Heart right ventricle (tissue), 16 donors: ENCODE measurements at regions of chr16 and their contacts with region 1.

Region 1: DNA sequence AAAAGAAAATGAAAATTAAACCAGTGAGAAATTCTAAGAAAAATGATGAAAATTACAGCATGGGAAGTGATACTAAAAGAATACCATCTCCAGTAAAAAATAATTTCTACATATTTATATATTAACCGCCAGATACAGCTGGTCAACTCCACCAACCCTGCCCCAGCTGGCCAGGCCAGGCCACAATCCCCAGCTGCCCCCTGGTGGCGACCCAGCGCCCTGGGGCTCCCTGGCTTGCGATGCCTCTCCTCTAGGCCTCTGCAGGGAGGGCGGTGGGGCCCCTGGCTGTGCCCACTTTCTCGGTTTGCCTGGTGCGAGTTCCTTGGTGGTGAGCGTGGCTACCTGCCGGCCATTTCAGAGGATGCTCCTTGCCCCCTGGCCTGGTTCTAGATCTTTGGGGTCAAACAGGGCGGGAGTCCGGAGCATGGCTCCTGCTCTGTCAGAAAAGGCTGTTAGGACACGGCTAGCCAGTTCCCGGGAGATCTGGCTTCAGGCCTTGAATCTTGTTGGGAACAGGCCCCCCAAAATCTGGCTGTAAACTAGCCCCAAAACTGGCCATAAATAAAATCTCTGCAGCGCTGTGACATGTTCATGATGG is 14.5 kb downstream of the GLIS2 start:
- DNase-seq: peak; percentile 84 to 89
- ATAC-seq: peak; percentile 54 to 72 (median 63)
- H3K4me3 ChIP-seq: no peak overlapping the region
- H3K27ac ChIP-seq: peak overlapping the region in 7 of 10 donors; percentile 88 to 99 (median 95)
- H3K4me1 ChIP-seq: peaks cover 33 to 54% (median 47%) of the 10 kb centered on the region in 9 donors
- H3K27me3 ChIP-seq: peaks cover 0 to 4% (median 0%) of the 10 kb centered on the region in 7 donors
- CTCF ChIP-seq: peak; percentile 94 to 99 (median 97)

Region 2: GRCh38 chr16:3983081-3983520 is 347.3 kb before region 1 on chr16:
- intact Hi-C with region 1: loop called in 2 of 10 experiments (anchors 5 to 10 kb)
- DNase-seq: peak; percentile 65 to 73
- ATAC-seq: peak; percentile 72 to 88 (median 83)
- H3K4me3 ChIP-seq: no peak overlapping the region
- H3K27ac ChIP-seq: no peak overlapping the region
- H3K4me1 ChIP-seq: peaks cover 0 to 11% (median 0%) of the 10 kb centered on the region in 9 donors
- H3K27me3 ChIP-seq: no peaks in the 10 kb centered on the region
- CTCF ChIP-seq: peak; percentile 29 to 85 (median 74)

Region 3: GRCh38 chr16:4183237-4184036 is 146.9 kb before region 1 on chr16:
- intact Hi-C with region 1: loop called in 1 of 10 experiments (anchors 5 kb)
- DNase-seq: peak; percentile 91 to 97
- ATAC-seq: peak; percentile 95 to 98 (median 96)
- H3K4me3 ChIP-seq: peak overlapping the region; percentile 62 to 84 (median 72)
- H3K27ac ChIP-seq: peak overlapping the region; percentile 79 to 100 (median 94)
- H3K4me1 ChIP-seq: peaks cover 3 to 20% (median 8%) of the 10 kb centered on the region in 9 donors
- H3K27me3 ChIP-seq: peaks cover 0 to 13% (median 0%) of the 10 kb centered on the region in 7 donors
- CTCF ChIP-seq: peak in 4 of 9 donors; percentile 11 to 45 (median 42)

Region 4: GRCh38 chr16:4200000-4200780 is 130.2 kb before region 1 on chr16:
- intact Hi-C with region 1: loop called in 6 of 10 experiments (anchors 1 to 10 kb)
- DNase-seq: peak; percentile 66 to 69
- ATAC-seq: peak; percentile 45 to 86 (median 78)
- H3K4me3 ChIP-seq: no peak overlapping the region
- H3K27ac ChIP-seq: peak overlapping the region in 2 of 10 donors; percentile 3 to 9
- H3K4me1 ChIP-seq: peaks cover 0 to 19% (median 8%) of the 10 kb centered on the region in 9 donors
- H3K27me3 ChIP-seq: no peaks in the 10 kb centered on the region
- CTCF ChIP-seq: peak; percentile 29 to 82 (median 72)

Region 5: DNA sequence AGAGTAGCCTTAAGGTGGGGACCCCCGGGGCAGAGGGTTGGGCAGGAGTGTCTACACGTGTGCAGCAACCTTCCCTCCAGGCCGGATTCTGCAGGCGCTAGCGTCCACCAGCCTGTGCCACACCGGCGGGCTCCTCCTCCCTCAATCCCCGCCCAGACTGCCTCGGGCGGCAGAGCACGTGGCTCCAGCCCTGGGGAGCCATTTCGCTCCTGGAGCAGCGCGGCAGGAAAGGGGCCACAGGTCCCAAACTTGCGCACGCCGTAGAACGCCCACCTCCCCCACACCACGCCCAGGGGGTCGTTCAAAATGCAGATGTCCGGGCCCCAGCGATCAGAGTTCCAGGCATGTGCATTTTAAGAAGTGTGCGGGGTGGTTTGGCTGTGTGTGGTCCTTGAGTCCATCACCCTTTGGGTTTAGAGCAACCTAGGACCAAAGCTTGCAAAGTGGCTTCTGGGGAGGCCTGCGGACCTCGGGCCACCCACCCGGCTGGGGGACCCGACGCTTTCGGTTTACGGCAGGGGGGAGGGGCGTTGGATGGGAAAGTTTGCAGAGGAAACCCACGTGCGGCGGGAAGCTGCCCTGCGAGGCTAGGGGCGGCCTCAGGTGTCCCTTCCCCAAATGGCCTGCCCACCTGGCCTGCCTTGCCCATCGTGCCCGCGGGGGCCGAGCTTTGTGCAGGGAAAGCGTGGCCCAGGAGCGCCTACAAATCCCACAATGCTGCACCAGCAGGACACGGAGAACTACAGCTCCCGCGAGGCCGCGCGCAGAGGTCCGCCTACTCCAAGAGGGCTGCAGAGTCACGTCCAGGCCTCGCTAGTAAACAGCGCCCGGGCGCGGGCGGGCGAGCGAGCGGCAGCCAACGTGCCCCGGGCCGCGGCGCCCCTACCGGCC is 59.0 kb before region 1 on chr16:
- intact Hi-C with region 1: loop called in 3 of 10 experiments (anchors 5 kb)
- DNase-seq: peak; percentile 92 to 93
- ATAC-seq: peak; percentile 83 to 90 (median 89)
- H3K4me3 ChIP-seq: peak overlapping the region; percentile 71 to 96 (median 86)
- H3K27ac ChIP-seq: peak overlapping the region; percentile 72 to 97 (median 91)
- H3K4me1 ChIP-seq: peaks cover 0 to 29% (median 17%) of the 10 kb centered on the region in 9 donors
- H3K27me3 ChIP-seq: no peaks in the 10 kb centered on the region
- CTCF ChIP-seq: peak in 2 of 9 donors; percentile 17 to 48

Region 6: GRCh38 chr16:4288148-4288921 is 42.0 kb before region 1 on chr16:
- intact Hi-C with region 1: loop called (anchors 1 to 5 kb)
- DNase-seq: peak; percentile 79 to 83
- ATAC-seq: peak; percentile 79 to 86 (median 81)
- H3K4me3 ChIP-seq: no peak overlapping the region
- H3K27ac ChIP-seq: no peak overlapping the region
- H3K4me1 ChIP-seq: peaks cover 5 to 33% (median 27%) of the 10 kb centered on the region in 9 donors
- H3K27me3 ChIP-seq: peaks cover 0 to 3% (median 0%) of the 10 kb centered on the region in 7 donors
- CTCF ChIP-seq: peak; percentile 93 to 99 (median 96)

Region 7: GRCh38 chr16:4307215-4308037 is 22.9 kb before region 1 on chr16:
- intact Hi-C with region 1: loop called in 2 of 10 experiments (anchors 2 kb)
- DNase-seq: peak; percentile 92 to 96
- ATAC-seq: peak; percentile 91 to 97 (median 95)
- H3K4me3 ChIP-seq: peak overlapping the region; percentile 25 to 66 (median 54)
- H3K27ac ChIP-seq: peak overlapping the region; percentile 29 to 94 (median 87)
- H3K4me1 ChIP-seq: peaks cover 2 to 30% (median 19%) of the 10 kb centered on the region in 9 donors
- H3K27me3 ChIP-seq: no peaks in the 10 kb centered on the region
- CTCF ChIP-seq: peak in 4 of 9 donors; percentile 6 to 35 (median 17)

Region 8: GRCh38 chr16:4358831-4359561 is 28.6 kb after region 1 on chr16:
- intact Hi-C with region 1: no loop called
- DNase-seq: peak; percentile 58 to 78
- ATAC-seq: peak; percentile 43 to 84 (median 72)
- H3K4me3 ChIP-seq: no peak overlapping the region
- H3K27ac ChIP-seq: no peak overlapping the region
- H3K4me1 ChIP-seq: no peaks in the 10 kb centered on the region
- H3K27me3 ChIP-seq: no peaks in the 10 kb centered on the region
- CTCF ChIP-seq: peak; percentile 88 to 96 (median 94)